Ovary (tissue), 10 donors: ENCODE measurements at regions of chr6 and their contacts with region 1.

Region 1: GRCh38 chr6:149094156-149094555 is 223.4 kb upstream of the TAB2 start:
- DNase-seq: no peak
- H3K4me3 ChIP-seq: no peak overlapping the region
- H3K27ac ChIP-seq: no peak overlapping the region
- H3K4me1 ChIP-seq: peaks cover 7% of the 10 kb centered on the region
- H3K27me3 ChIP-seq: no peaks in the 10 kb centered on the region
- CTCF ChIP-seq: no peak
- EP300 ChIP-seq: no peak
- POLR2A ChIP-seq: no peak

Region 2: GRCh38 chr6:148657048-148657447 is 437.1 kb before region 1 on chr6:
- intact Hi-C with region 1: no loop called
- DNase-seq: no peak
- H3K4me3 ChIP-seq: no peak overlapping the region
- H3K27ac ChIP-seq: no peak overlapping the region
- H3K4me1 ChIP-seq: no peaks in the 10 kb centered on the region
- H3K27me3 ChIP-seq: no peaks in the 10 kb centered on the region
- CTCF ChIP-seq: no peak
- EP300 ChIP-seq: no peak
- POLR2A ChIP-seq: no peak

Region 3: DNA sequence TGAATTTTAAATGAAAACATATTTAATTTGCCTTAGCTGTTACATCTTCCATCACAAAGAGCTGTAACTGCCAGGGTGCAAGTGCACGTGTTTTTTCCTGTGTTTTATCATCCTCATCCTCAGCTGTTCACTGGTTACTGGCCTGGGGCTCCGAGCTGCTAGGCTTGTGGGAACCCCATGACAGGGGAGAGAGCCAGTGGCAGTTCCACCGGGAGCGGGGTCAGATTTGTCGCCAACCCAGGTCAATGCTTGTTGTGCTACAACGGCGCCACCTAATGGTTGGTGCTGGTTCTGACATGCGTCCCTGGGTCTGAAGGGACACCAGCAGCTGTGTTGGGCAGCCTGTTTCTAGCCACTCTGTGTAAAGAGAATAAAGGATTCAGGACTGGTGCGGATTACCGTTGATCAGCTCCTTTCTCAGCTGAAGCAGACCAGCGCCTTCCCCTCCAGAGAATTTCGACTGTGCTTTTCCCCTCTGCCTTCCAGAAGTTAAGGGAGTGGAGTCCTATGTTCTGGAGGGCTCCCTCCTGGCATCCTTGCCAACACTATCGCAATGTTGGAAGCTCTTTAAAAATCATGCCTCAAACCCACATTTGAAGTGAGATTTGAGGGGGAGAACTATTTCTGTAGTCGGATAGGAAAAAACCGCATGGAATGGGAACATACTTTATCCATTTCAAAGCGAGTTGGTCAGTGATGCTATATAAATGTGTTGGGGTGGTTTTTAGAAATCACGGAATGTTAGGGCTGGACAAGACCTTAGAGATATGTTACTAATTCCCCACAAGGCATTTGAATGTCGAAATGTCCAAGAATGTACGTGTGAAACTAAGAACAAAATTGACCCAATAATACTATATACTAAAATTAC is 338.0 kb after region 1 on chr6:
- intact Hi-C with region 1: loop called in 2 of 4 experiments (anchors 5 to 10 kb)
- DNase-seq: peak; percentile 82 to 91 (median 90)
- H3K4me3 ChIP-seq: no peak overlapping the region
- H3K27ac ChIP-seq: no peak overlapping the region
- H3K4me1 ChIP-seq: peaks cover 2% of the 10 kb centered on the region
- H3K27me3 ChIP-seq: no peaks in the 10 kb centered on the region
- CTCF ChIP-seq: peak; percentile 85 to 92 (median 89)
- EP300 ChIP-seq: no peak
- POLR2A ChIP-seq: no peak

Region 4: DNA sequence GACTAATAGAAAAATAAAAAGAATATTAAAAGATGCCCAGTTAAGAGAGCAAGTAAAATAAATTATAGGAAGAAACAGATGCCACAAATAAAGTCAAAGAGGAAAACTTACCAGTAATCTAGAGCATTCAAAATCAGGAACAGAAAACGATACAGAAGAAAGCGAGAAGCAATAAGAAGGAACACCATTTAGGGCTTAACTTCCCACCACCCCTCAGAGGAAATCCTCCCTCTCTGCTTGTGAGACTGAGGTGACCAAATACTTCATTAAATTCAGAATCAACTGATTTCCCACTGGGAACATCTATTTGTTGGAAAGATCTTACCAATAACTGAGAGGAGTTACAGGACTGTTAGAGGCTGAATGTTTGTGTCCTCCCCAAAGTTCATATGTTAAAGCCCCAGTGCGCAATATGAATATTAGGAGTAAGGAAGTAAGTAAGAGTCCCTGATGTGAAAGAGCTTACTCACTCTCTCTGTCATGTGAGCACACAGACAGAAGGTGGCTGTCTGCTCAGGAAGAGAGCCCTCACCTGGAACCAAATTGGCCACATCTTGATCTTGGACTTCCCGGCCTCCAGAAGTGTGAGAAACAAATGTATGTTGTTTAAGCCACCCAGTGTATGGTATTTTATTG is 534.8 kb after region 1 on chr6:
- intact Hi-C with region 1: no loop called
- DNase-seq: no peak
- H3K4me3 ChIP-seq: no peak overlapping the region
- H3K27ac ChIP-seq: no peak overlapping the region
- H3K4me1 ChIP-seq: no peaks in the 10 kb centered on the region
- H3K27me3 ChIP-seq: no peaks in the 10 kb centered on the region
- CTCF ChIP-seq: no peak
- EP300 ChIP-seq: no peak
- POLR2A ChIP-seq: no peak